Vagina (tissue), 2 donors: ENCODE measurements at regions of chr7 and their contacts with region 1.

Region 1: GRCh38 chr7:151773756-151774155 is 103.2 kb downstream of the PRKAG2 start:
- DNase-seq: no peak
- H3K4me3 ChIP-seq: no peak overlapping the region
- H3K27ac ChIP-seq: no peak overlapping the region
- H3K4me1 ChIP-seq: no peaks in the 10 kb centered on the region
- H3K27me3 ChIP-seq: no peaks in the 10 kb centered on the region
- CTCF ChIP-seq: no peak
- POLR2A ChIP-seq: no peak

Region 2: GRCh38 chr7:151616443-151617213 is 157.1 kb before region 1 on chr7:
- intact Hi-C with region 1: no loop called
- DNase-seq: no peak
- H3K4me3 ChIP-seq: no peak overlapping the region
- H3K27ac ChIP-seq: no peak overlapping the region
- H3K4me1 ChIP-seq: no peaks in the 10 kb centered on the region
- H3K27me3 ChIP-seq: no peaks in the 10 kb centered on the region
- CTCF ChIP-seq: no peak
- POLR2A ChIP-seq: no peak

Region 3: GRCh38 chr7:151631968-151632749 is 141.6 kb before region 1 on chr7:
- intact Hi-C with region 1: no loop called
- DNase-seq: no peak
- H3K4me3 ChIP-seq: peak overlapping the region; percentile 62 to 84
- H3K27ac ChIP-seq: peak overlapping the region; percentile 94
- H3K4me1 ChIP-seq: peaks cover 32% of the 10 kb centered on the region
- H3K27me3 ChIP-seq: no peaks in the 10 kb centered on the region
- CTCF ChIP-seq: peak in 1 of 3 experiments; percentile 55
- POLR2A ChIP-seq: no peak

Region 4: DNA sequence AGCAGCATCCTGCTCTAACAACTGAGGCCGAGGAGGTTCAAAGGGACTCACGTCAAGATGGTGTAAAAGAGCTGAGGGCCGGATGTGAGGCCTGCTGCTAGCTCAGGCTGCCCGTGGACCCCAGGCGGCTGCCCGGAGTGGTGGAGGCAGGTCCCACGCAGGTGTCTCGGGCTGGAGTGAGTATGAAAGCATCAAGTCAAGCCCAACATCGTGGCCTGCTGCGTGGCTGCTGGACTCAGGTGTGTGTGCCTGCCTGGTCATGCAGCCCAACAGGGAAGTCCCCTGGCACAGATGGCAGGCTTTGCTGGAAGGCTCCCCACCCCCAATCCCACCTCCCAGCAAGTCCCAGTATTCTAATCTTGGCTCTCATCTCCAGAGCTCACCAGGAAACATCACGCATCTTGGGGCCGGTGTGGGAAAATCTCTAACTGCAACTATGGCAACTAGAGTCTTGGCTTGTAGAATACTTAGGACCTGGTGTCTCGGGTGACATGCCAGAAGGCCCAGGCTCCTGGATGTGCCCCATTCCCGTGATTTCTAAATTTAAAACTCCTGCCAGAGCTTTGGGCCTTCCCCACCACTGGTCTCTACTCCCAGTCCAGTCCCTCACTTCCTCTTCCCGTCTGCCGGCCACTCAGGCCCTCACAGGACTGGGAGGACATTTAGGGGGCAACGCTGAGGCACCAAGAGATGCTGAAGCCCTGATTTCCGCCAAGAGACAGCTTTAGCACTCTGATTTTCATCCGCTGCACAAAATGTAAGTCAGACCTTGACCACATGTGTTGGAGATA is 17.3 kb after region 1 on chr7:
- intact Hi-C with region 1: no loop called
- DNase-seq: no peak
- H3K4me3 ChIP-seq: no peak overlapping the region
- H3K27ac ChIP-seq: no peak overlapping the region
- H3K4me1 ChIP-seq: peaks cover 2% of the 10 kb centered on the region
- H3K27me3 ChIP-seq: no peaks in the 10 kb centered on the region
- CTCF ChIP-seq: no peak
- POLR2A ChIP-seq: no peak

Region 5: GRCh38 chr7:151818674-151819537 is 45.1 kb after region 1 on chr7:
- intact Hi-C with region 1: no loop called
- DNase-seq: no peak
- H3K4me3 ChIP-seq: no peak overlapping the region
- H3K27ac ChIP-seq: no peak overlapping the region
- H3K4me1 ChIP-seq: peaks cover 25% of the 10 kb centered on the region
- H3K27me3 ChIP-seq: no peaks in the 10 kb centered on the region
- CTCF ChIP-seq: no peak
- POLR2A ChIP-seq: no peak

Region 6: DNA sequence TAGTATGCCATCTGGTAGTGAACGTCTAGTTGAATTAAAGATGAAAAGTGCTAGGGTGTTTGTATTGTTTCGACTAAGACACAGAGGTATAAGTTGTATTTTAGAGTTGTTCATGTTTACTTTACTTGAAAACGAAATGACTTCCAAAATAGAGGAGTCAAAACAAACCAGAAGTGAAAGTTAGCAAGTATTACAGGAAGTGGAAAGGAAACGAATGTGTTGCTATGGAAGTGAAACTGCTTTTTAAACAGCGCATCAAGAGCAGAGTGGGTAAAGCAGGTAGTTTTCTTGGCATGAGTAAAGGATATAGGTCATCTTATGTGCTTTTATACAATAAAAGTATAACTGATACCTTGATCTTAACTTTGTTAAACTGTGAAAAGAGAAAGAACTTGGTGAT is 162.5 kb after region 1 on chr7:
- intact Hi-C with region 1: loop called (anchors 10 kb)
- DNase-seq: no peak
- H3K4me3 ChIP-seq: no peak overlapping the region
- H3K27ac ChIP-seq: no peak overlapping the region
- H3K4me1 ChIP-seq: peaks cover 10% of the 10 kb centered on the region
- H3K27me3 ChIP-seq: no peaks in the 10 kb centered on the region
- CTCF ChIP-seq: no peak
- POLR2A ChIP-seq: no peak